Activated CD4-positive, alpha-beta memory T cell treated with anti-CD3 and anti-CD28 coated beads for 36 hours (primary cell): ENCODE measurements at regions of chr18 and their contacts with region 1.

Region 1: GRCh38 chr18:3245853-3246634 is 1.6 kb upstream of the MYL12A start:
- DNase-seq: peak; percentile 91
- H3K4me3 Mint-ChIP-seq: peak overlapping the region; percentile 97
- H3K27ac Mint-ChIP-seq: peak overlapping the region; percentile 98
- H3K4me1 Mint-ChIP-seq: peaks cover 23% of the 10 kb centered on the region
- H3K27me3 Mint-ChIP-seq: no peaks in the 10 kb centered on the region

Region 2: GRCh38 chr18:2571200-2572143 is 674.6 kb before region 1 on chr18 and contains the starts of genes METTL4 and NDC80:
- CTCF ChIA-PET with region 1: no interaction called
- POLR2A ChIA-PET with region 1: no interaction called
- intact Hi-C with region 1: loop called (anchors 2 kb)
- DNase-seq: peak; percentile 90
- H3K4me3 Mint-ChIP-seq: peak within 1 kb of the TSS; percentile 96
- H3K27ac Mint-ChIP-seq: peak within 1 kb of the TSS; percentile 95
- H3K4me1 Mint-ChIP-seq: peaks cover 51% of the 10 kb centered on the region
- H3K27me3 Mint-ChIP-seq: no peaks in the 10 kb centered on the region
- total RNA-seq, gene METTL4: 19.6 to 23.0 TPM
- total RNA-seq, gene NDC80: 79.3 to 83.1 TPM

Region 3: GRCh38 chr18:2758309-2758708 is 487.7 kb before region 1 on chr18:
- CTCF ChIA-PET with region 1: no interaction called
- POLR2A ChIA-PET with region 1: no interaction called
- intact Hi-C with region 1: loop called (anchors 10 kb)
- DNase-seq: no peak
- H3K4me3 Mint-ChIP-seq: no peak overlapping the region
- H3K27ac Mint-ChIP-seq: peak overlapping the region; percentile 31
- H3K4me1 Mint-ChIP-seq: peaks cover 15% of the 10 kb centered on the region
- H3K27me3 Mint-ChIP-seq: no peaks in the 10 kb centered on the region

Region 4: DNA sequence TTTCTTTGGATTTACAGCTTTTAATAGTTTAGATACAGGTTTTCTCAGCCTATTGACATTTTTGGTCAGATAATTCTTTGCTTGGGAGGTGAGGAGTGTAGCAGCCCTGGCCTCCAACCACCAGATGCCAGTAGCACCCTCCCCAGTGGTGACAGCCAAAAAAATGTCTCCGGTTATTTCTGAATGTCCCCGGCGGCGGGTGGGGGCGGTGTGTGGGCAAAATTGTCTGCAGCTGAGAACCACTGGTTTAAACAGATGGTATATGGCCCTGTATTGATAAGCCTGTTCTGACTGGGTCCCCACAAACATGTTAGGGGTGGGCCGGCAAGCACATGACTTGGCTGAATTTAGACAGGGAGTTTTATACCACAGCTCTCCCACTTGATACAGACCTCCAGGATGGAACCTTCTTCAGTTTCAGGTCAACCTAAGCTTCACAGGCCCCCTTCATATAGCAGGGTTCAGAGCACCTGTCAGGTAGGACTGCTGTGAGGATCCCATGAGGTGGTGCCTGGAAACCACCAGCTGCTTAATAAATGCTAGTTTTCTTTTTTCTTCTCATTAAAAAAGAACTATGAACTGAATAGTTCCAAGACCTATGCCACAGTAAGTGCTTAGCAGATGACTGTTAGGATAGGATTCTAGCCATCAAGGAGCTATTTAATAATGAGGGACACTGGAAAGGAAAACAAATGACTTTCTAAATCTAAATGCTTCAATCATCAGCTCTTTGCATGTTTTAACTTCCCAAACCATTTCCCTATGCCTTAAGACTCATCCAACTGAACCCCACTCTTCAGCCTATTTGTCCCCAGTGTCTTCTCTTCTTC is 251.2 kb before region 1 on chr18:
- CTCF ChIA-PET with region 1: interaction called, 41 read pairs
- POLR2A ChIA-PET with region 1: interaction called, 10 read pairs
- intact Hi-C with region 1: loop called (anchors 1 kb)
- DNase-seq: peak; percentile 86
- H3K4me3 Mint-ChIP-seq: peak overlapping the region; percentile 26
- H3K27ac Mint-ChIP-seq: peak overlapping the region; percentile 91
- H3K4me1 Mint-ChIP-seq: peaks cover 83% of the 10 kb centered on the region
- H3K27me3 Mint-ChIP-seq: no peaks in the 10 kb centered on the region

Region 5: DNA sequence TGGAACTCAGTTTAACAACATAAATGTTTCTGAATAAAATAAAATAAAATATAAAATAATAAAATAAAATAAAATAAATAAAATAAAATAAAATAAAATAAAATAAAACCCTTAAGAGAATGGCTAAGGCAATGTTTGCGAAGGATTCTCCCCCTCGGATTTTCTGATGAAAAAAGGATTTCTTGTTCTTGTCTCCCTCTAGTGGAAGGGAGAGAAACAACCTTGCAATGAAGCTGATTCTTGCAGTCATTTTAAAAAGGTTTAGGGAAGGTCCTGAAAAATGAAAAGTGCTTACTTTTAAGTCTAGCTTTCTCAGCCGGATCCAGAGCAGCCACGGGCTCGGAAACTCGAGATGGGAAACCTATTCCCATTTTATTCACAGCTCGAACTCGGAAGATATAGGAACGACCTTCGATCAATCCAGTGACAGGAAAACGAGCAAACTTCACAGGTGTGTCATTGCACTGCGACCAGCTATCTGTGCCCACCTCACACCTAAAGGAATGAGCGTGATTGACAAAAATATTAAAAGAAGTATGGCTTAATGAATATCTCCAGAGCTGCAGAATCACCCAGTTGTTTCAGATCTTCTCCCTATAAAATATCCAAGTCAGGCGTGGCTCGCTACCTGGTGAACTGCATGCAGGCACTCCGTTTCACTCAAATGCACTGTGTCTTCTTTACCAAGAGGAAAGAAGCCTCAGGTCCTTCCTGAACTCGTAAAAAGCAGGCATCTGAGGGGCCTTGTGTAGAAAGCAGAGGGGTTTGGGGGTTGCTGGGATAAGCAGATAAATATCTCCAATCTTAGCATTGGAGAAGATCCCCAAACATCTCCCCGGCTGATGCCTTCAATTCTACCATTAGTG is 94.4 kb before region 1 on chr18:
- CTCF ChIA-PET with region 1: interaction called, 55 read pairs
- POLR2A ChIA-PET with region 1: interaction called, 4 read pairs
- intact Hi-C with region 1: loop called (anchors 1 kb)
- DNase-seq: no peak
- H3K4me3 Mint-ChIP-seq: no peak overlapping the region
- H3K27ac Mint-ChIP-seq: no peak overlapping the region
- H3K4me1 Mint-ChIP-seq: peaks cover 6% of the 10 kb centered on the region
- H3K27me3 Mint-ChIP-seq: no peaks in the 10 kb centered on the region

Region 6: DNA sequence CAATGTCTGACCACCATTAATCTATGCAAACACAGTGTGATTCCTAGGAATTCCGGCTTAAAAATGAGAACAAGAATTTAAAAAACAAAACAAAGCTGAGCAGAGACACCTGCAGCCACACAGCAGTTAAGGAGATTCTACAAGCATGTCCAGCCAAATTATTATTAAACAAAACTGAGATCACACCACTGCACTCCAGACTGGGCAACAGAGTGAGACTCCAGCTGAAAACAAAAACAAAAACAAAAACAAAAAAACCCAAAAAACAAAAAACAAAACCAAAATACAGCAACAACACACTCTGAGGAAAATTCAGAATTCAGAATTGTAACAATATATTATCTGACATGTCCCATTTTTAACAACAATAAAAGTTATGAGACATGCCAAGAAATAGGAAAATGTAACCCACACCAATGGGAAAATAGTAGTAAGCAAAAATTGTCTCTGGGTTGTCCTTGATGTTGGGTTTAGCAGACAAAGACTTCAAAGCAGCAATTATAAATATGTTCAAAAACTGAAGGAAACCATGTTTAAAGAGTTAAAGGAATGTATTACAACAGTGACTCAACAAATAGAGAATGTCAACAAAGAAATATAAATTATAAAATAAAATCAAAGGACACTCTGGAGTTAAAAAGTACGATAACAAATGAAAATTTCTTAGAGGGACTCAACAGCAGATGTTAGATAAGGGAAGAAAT is 46.0 kb before region 1 on chr18:
- CTCF ChIA-PET with region 1: no interaction called
- POLR2A ChIA-PET with region 1: no interaction called
- intact Hi-C with region 1: no loop called
- DNase-seq: no peak
- H3K4me3 Mint-ChIP-seq: no peak overlapping the region
- H3K27ac Mint-ChIP-seq: no peak overlapping the region
- H3K4me1 Mint-ChIP-seq: no peaks in the 10 kb centered on the region
- H3K27me3 Mint-ChIP-seq: no peaks in the 10 kb centered on the region

Region 7: DNA sequence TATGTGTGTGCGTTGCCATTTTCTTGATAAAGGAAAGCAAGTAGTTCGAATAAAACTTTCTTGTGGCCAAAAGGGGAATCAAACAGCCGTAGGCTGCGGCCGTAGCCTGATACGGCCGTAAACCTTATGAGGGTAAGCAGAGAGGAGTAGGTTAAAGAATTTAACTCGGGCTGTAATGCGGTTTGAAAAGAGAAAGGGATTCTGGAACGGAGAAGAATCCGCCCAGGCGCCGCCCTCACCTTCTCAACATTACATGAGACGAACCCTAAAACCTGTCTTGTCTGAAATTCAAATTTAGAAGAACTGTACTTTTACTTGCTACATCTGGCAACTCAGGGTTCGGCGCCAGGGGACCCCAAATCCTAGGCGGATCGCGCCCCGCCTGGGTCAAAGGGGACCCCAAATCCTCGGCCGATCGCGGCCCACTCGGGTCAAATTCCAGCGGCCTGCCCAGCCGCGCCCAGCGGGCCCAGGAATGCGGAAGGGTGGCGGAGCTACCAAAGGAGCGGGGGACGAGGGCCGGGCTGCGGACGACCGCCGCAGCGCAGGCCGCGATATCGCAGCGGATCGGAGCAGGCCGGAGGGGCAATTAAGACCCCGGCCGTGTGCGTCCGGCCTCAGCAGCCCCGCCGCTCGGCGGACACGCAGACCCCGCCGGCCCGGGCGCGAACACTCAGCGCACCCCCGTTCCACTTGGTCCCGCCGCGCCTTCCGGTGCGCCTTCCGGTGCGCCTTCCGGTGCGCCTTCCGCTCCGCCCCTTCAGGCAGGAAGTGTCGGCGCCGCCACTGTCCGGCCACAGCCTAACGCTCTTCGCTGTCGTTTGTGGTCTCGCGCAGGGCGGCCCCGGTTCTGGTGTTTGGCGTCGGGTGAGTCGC is 15.6 kb after region 1 on chr18 and contains the start of gene MYL12B:
- CTCF ChIA-PET with region 1: interaction called, 5 read pairs
- POLR2A ChIA-PET with region 1: interaction called, 24 read pairs
- intact Hi-C with region 1: loop called (anchors 1 kb)
- DNase-seq: peak; percentile 85
- H3K4me3 Mint-ChIP-seq: peak within 1 kb of the TSS; percentile 89
- H3K27ac Mint-ChIP-seq: peak within 1 kb of the TSS; percentile 95
- H3K4me1 Mint-ChIP-seq: peaks cover 62% of the 10 kb centered on the region
- H3K27me3 Mint-ChIP-seq: no peaks in the 10 kb centered on the region
- total RNA-seq, gene MYL12B: 335 to 339 TPM